ENCODE measurements at regions of chr18 and their contacts with region 1.

Region 1: DNA sequence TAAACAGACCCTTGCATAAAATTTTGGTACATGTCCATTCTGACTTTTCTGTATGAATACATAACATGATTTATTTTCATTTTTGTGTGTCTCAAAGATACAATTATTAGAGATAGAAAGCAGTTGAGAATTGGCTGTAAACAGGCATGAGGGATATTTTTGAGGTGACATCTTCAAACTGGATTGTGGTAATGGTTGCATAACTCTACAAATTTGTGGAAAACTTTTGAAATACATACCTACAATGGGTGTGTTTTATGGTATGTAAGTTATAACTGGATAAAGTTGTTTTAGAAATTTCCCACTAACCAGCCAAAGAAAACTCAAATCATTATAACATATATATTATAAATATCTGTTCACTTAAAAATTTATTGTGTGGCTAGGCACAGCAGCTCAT is 39.6 kb downstream of the GREB1L start:
- DNase-seq: no peak
- H3K4me3 ChIP-seq: no peak overlapping the region
- H3K27ac ChIP-seq: no peak overlapping the region
- H3K4me1 ChIP-seq: no peaks in the 10 kb centered on the region
- H3K27me3 ChIP-seq: no peaks in the 10 kb centered on the region
- CTCF ChIP-seq: no peak
- POLR2A ChIP-seq: no peak

Region 2: GRCh38 chr18:21230436-21230835 is 51.2 kb before region 1 on chr18:
- intact Hi-C with region 1: no loop called
- DNase-seq: no peak
- H3K4me3 ChIP-seq: no peak overlapping the region
- H3K27ac ChIP-seq: no peak overlapping the region
- H3K4me1 ChIP-seq: no peaks in the 10 kb centered on the region
- H3K27me3 ChIP-seq: no peaks in the 10 kb centered on the region
- CTCF ChIP-seq: no peak
- POLR2A ChIP-seq: no peak

Region 3: DNA sequence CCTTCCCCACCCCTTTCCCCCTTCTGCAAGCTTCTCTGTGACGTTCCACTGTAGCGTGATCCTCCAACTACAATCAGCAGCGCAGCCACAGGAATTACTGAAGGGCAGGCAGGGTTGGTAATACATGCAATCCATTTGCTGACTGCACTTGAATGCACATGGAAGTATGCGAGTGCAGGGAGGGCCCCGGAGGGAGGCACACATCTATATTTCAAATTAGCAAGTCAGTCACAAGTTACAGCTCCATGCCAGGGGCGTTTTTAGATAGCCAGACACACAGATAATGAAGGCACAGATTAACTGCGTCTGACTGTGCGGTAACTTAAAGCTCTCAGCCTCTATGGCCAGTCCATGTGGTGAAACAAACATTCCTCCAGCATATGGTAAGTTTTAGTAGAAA is 678.6 kb after region 1 on chr18:
- intact Hi-C with region 1: loop called (anchors 5 kb)
- DNase-seq: no peak
- H3K4me3 ChIP-seq: no peak overlapping the region
- H3K27ac ChIP-seq: no peak overlapping the region
- H3K4me1 ChIP-seq: no peaks in the 10 kb centered on the region
- H3K27me3 ChIP-seq: no peaks in the 10 kb centered on the region
- CTCF ChIP-seq: no peak
- POLR2A ChIP-seq: no peak

Measured in breast epithelium (tissue), 4 donors.